ENCODE measurements at regions of chr17 and their contacts with region 1.

Region 1: DNA sequence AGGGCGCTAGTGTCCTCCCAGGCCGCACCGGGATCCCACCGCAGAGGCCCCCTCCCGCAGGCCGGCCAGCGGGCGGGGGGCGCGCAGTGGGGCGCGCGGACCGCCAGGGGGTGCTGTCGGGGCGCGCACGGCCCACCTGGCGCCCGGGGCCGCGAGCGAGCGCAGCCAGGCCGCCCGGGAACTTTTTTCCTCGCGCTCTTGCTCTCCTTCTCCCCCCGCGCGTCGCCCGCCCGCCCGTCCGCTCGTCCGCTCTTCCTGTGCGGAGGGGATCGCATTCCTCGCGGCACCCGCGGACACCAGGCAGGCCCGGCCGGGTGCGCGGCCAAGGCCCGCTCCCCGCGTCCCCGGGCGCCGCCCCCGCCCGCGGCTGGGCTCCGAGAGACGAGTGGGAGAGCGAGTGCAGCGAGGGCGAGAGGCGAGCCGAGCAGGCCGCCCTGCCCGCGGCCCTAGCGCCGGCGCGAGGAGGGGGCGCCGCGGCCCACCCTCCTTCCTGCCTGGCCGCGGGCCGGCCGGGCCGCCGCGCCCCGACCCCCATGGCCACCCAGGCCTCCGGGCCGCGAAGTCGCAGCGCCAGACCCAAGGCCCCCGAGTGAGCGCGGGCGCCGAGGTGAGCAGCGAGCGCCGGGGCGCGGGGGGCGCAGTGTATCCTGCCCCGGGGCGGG is at the start of gene RAI1:
- DNase-seq: peak; percentile 86
- total RNA-seq, gene RAI1: 28.8 TPM

Region 2: DNA sequence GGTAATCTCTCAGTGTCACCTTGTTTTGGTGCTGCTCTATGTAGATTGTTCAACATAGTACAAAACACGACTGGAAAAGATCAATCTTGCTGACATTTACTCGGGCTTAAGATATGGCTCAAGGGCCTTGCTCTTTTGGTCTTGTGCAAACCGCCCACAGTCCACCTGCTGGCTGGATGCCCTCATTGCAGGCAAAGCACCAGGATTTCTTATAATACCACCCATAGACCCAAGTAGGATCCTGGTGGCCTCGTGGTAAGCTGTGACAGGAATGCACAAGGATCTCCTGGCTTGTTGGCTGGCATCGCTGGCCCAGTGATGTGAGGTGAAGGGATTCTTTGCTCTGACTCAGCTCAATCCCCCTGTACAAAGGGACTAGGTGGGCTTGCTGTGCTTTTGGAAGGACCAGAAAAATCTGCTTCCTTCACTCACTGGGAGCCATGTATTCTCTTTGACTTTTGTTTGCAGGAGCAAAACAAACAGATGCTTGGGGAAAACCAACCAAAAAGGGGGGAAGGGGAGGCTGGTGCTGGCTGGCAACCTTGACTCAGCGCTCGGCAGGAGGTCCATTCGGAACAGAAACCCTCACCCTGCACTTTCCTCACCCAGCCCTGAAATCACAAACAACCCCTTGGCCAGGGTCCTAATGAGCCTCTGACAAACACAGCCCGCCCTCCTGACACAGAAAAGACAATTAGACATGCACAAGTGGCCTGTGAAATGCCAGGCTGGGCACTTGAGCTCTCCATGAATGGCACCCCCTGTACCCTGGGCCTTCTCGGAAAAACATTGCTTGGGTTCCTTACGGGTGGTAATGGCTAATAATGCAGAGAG is 241.1 kb before region 1 on chr17:
- intact Hi-C with region 1: no loop called
- DNase-seq: no peak

Region 3: GRCh38 chr17:17783116-17783824 is 102.0 kb after region 1 on chr17:
- intact Hi-C with region 1: loop called (anchors 10 kb)
- DNase-seq: no peak

Region 4: GRCh38 chr17:17859909-17860765 is 178.8 kb after region 1 on chr17:
- intact Hi-C with region 1: loop called (anchors 1 kb)
- DNase-seq: peak; percentile 90

Region 5: DNA sequence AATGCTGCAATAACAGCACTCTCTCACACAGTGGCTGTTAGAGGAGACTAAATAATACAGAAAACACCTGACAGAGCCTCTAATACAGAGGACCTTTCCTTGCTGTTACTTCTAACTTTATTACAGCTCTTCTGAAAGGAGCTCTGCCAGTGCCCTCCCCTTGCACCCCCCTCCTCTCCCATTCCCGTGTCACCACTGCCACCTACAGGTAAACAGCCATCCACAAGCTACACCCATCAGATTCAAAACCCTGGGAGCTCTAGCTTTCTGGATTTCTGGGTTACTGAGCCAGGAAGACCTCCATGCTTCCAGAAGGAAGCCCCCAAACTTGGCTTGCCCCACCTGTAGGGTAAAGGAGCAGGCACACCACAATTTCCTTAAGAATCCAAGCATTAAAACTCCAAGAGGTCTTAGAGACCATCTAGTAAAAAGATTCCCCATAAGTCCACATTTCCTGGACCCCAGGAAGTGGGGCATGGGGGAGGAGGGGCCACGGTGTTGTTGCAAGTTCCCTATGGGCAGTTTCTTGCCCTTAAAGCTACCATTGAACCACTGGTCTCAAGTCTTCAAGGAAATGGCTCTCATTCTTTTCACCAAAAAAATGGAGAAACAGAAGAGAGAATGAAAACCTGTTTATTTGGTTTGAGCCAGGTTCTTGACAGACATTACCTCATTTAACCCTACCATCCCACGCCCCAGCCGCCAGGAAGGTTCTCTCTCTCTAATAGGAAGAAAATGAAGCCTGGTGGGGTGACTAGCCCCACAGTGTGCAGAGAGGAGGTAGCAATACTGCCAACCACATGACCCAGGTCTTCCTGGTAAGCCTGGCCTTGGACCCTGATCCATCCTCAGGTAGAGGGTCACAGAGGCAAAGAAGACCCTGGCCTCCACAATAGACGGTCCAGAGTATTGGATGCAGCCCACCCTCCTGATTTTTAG is 238.1 kb after region 1 on chr17:
- intact Hi-C with region 1: loop called (anchors 5 kb)
- DNase-seq: peak; percentile 80

Region 6: DNA sequence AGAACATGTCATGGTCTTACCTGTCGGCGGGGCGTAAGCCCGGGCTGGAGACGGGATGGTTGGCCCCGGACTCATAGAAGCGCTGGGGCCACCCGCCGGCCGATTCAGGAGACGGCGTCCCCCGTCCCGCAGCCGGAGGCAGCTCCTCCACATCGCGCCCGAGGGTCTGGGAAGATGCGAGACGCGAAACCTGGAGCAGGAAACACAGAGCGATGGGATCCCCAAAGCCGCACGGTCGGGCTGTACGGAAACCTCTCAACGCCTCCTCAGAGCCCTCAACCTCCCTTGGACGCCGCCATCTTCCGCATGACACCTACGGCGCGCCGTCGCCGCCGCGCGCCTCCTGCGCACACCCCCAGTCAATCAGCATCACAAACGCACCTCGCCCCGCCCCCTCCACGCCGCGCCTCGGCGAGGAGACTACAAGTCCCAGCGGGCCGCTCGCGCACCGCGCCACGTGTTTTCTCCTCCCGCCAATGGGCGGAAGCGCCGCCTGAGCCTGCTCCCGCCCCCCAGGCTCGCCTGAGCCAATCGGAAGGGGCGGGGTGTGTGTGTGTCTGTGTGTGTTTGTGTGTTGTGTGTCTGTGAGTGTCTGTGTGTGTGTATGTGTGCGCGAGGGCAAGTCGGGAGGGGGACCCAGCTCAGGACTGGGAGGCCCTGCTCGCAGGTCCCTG is 357.7 kb after region 1 on chr17 and contains the starts of genes ATPAF2 and GID4:
- intact Hi-C with region 1: loop called (anchors 5 kb)
- DNase-seq: peak; percentile 100
- total RNA-seq, gene ATPAF2: 31.5 TPM
- total RNA-seq, gene GID4: 17.9 TPM

Measured in cardiac septum (tissue), 1 donor.